ENCODE measurements at regions of chr5 and their contacts with region 1.

Region 1: DNA sequence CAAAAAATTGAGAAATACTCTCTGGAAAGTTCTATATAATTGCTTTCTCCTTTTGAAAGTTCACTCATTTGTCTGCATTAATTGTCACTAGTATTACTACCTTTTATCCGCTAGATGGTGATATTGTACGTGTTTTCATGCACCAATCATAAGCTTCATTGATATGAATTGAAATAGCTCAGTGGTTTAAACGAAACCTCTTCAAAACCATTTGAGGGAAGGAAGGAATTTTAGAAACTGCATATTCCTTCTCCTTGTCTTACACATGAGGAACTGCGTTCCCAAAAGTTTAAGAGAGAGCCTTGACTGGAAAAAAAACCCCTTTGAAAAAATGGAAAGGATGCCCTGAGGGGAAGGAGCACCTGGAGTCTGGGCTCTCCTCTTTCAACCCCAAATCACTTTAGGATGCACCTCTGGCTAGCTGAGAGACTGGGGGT is 98.6 kb downstream of the YTHDC2 start:
- DNase-seq: no peak
- ATAC-seq: peak in 3 of 4 donors; percentile 81 to 92 (median 85)
- H3K4me3 ChIP-seq: no peak overlapping the region
- H3K27ac ChIP-seq: no peak overlapping the region
- H3K4me1 ChIP-seq: no peaks in the 10 kb centered on the region
- H3K27me3 ChIP-seq: no peaks in the 10 kb centered on the region
- CTCF ChIP-seq: peak in 3 of 4 donors; percentile 31 to 67 (median 55)

Region 2: GRCh38 chr5:113939950-113940349 is 327.9 kb after region 1 on chr5:
- intact Hi-C with region 1: no loop called
- DNase-seq: no peak
- ATAC-seq: no peak
- H3K4me3 ChIP-seq: no peak overlapping the region
- H3K27ac ChIP-seq: no peak overlapping the region
- H3K4me1 ChIP-seq: no peaks in the 10 kb centered on the region
- H3K27me3 ChIP-seq: no peaks in the 10 kb centered on the region
- CTCF ChIP-seq: no peak

Region 3: GRCh38 chr5:114062932-114063874 is 451.1 kb after region 1 on chr5:
- intact Hi-C with region 1: no loop called
- DNase-seq: no peak
- ATAC-seq: no peak
- H3K4me3 ChIP-seq: no peak overlapping the region
- H3K27ac ChIP-seq: no peak overlapping the region
- H3K4me1 ChIP-seq: peaks cover 8 to 14% (median 13%) of the 10 kb centered on the region in 3 donors
- H3K27me3 ChIP-seq: no peaks in the 10 kb centered on the region
- CTCF ChIP-seq: no peak

Region 4: GRCh38 chr5:114449860-114450421 is 837.9 kb after region 1 on chr5:
- intact Hi-C with region 1: loop called in 1 of 3 experiments (anchors 10 kb)
- DNase-seq: peak; percentile 35 to 74 (median 64)
- ATAC-seq: peak; percentile 99 to 100 (median 100)
- H3K4me3 ChIP-seq: no peak overlapping the region
- H3K27ac ChIP-seq: no peak overlapping the region
- H3K4me1 ChIP-seq: peaks cover 0 to 4% (median 0%) of the 10 kb centered on the region in 3 donors
- H3K27me3 ChIP-seq: no peaks in the 10 kb centered on the region
- CTCF ChIP-seq: peak; percentile 49 to 69 (median 59)

Measured in pancreas (tissue), 10 donors.